Aorta (tissue), 5 donors: ENCODE measurements at regions of chr14 and their contacts with region 1.

Region 1: GRCh38 chr14:72291908-72292688 is 359.9 kb downstream of the RGS6 start:
- DNase-seq: no peak
- ATAC-seq: peak; percentile 62
- H3K4me3 ChIP-seq: no peak overlapping the region
- H3K27ac ChIP-seq: no peak overlapping the region
- H3K4me1 ChIP-seq: no peaks in the 10 kb centered on the region
- H3K27me3 ChIP-seq: no peaks in the 10 kb centered on the region

Region 2: DNA sequence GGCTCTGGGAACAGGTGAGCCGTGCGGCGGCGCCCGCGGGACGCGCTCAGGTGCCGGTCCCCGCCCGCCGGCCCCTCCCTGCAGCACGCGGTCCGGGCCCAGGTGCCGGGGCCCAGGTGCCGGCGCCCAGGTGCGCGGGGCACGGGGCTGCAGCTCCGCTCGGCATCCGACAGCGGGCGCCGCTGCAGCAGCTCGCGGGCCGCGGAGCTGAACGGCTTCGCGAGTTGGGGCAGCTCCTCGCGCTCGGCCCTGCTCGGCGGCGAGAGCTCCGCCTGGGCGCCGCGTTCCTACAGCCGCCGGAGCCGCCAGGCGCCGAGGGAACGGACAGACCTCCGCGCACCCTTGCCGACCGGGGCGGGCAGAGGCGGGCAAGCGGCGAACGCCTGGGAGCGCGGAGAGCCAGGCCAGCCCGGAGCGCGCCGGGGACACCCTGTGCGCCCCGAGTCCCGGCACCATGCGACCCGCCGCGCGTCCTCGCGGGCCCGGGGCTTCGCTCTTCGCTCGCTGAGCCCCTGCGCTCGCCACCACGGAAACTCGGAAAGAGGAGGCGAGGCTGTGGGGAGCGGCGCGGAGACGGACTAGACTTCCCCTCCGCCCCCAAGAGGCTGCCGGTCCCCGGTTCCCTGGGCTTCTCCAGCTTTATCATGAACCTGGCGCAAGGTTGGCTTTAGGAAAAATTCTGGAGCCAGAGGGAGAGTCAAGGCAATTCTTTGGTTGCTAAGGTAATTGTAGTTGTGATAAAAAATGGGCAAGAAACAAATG is 359.7 kb before region 1 on chr14 and contains the start of gene RGS6:
- intact Hi-C with region 1: loop called in 1 of 2 experiments (anchors 10 kb)
- DNase-seq: no peak
- ATAC-seq: no peak
- H3K4me3 ChIP-seq: peak within 1 kb of the TSS; percentile 18 to 38
- H3K27ac ChIP-seq: no peak within 1 kb of the TSS
- H3K4me1 ChIP-seq: no peaks in the 10 kb centered on the region
- H3K27me3 ChIP-seq: no peaks in the 10 kb centered on the region
- total RNA-seq, gene RGS6: 1.8 to 2.0 TPM

Region 3: GRCh38 chr14:72023722-72024407 is 268.2 kb before region 1 on chr14:
- intact Hi-C with region 1: loop called (anchors 2 to 10 kb)
- DNase-seq: no peak
- ATAC-seq: no peak
- H3K4me3 ChIP-seq: no peak overlapping the region
- H3K27ac ChIP-seq: no peak overlapping the region
- H3K4me1 ChIP-seq: no peaks in the 10 kb centered on the region
- H3K27me3 ChIP-seq: peaks cover 0 to 3% of the 10 kb centered on the region in 2 donors

Region 4: DNA sequence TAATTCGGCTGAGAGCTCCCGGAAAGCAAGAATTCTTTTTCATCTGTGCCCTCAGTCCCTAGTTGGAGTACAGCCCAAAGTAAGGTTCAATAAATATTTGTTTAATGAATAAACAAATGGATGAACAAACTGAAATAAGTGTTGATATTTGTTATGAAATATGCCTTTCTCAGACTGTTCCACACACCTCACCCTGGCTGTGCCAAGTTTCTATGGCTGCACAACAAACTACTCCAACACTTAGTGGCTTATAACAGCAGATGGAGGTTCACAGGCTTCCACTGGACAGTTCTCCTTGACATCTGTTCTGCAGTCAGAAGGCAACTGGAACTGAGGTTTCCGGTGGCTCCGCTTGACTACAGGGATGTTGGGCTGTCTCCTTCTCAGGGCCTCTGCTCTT is 162.8 kb before region 1 on chr14:
- intact Hi-C with region 1: no loop called
- DNase-seq: no peak
- ATAC-seq: no peak
- H3K4me3 ChIP-seq: no peak overlapping the region
- H3K27ac ChIP-seq: no peak overlapping the region
- H3K4me1 ChIP-seq: no peaks in the 10 kb centered on the region
- H3K27me3 ChIP-seq: peaks cover 0 to 2% of the 10 kb centered on the region in 2 donors